Heart left ventricle (tissue), 16 donors: ENCODE measurements at regions of chr10 and their contacts with region 1.

Region 1: GRCh38 chr10:73167783-73168464 is at the starts of genes ECD and FAM149B1:
- DNase-seq: peak; percentile 94 to 96 (median 95)
- ATAC-seq: peak; percentile 92 to 99 (median 98)
- H3K4me3 ChIP-seq: peak within 1 kb of the TSS; percentile 71 to 98 (median 82)
- H3K27ac ChIP-seq: peak within 1 kb of the TSS; percentile 80 to 97 (median 94)
- H3K4me1 ChIP-seq: peaks cover 0 to 50% (median 31%) of the 10 kb centered on the region in 12 donors
- H3K27me3 ChIP-seq: no peaks in the 10 kb centered on the region
- CTCF ChIP-seq: peak in 4 of 12 donors; percentile 21 to 36 (median 26)
- POLR2A ChIP-seq: peak; percentile 76 to 95
- total RNA-seq, gene ECD: 13.3 to 21.9 (median 18.4) TPM
- total RNA-seq, gene FAM149B1: 9.9 to 21.8 (median 17.8) TPM

Region 2: DNA sequence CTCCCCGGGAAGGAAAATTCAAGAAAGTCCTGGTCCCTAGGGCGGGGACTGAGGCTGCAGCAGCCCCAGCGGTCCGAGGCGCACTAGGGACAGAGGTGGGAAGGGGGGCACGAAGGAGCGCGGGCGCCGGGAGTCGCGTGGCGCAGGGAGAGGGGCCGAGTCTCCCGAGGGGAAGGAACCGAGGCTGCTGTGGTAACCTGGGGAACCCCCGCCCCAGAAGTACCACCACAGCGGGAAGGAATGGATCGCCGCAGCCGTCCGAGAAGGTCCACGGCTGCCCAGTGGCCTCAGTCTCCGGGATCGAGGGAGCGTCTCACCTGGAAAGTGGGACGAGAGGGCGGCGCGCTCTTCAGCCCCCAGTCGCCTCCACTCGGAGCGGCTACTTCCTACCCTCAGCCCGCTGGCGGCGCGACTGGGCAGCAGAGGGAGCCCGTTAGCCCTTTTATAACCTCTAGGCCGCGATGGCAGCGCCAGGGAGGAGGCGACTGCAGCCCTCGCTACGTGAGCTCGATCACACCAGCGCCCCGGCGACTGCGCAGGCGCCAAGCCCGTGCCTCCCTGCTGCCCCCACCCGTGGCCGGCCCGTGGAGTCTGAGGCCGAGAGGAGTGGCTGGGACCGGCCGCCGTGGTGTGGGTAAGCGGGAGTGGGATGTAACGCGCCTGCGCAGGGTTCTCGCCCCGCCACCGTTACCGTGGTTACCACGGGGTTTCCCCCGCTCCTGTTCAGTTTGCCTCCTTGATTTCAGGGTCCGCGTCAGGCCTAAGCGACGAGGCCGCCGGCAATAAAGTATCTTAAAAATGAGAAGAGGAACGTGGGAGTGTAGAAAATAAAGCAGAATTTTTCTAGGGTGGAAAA is 71.2 kb before region 1 on chr10 and contains the start of gene P4HA1:
- intact Hi-C with region 1: loop called in 5 of 10 experiments (anchors 2 to 10 kb)
- DNase-seq: peak; percentile 99 to 100 (median 100)
- ATAC-seq: peak; percentile 96 to 98 (median 97)
- H3K4me3 ChIP-seq: peak within 1 kb of the TSS; percentile 47 to 93 (median 86)
- H3K27ac ChIP-seq: peak within 1 kb of the TSS; percentile 90 to 99 (median 97)
- H3K4me1 ChIP-seq: peaks cover 0 to 42% (median 19%) of the 10 kb centered on the region in 12 donors
- H3K27me3 ChIP-seq: no peaks in the 10 kb centered on the region
- CTCF ChIP-seq: peak; percentile 49 to 87 (median 72)
- POLR2A ChIP-seq: peak in 1 of 2 donors; percentile 98
- total RNA-seq, gene P4HA1: 44.5 to 71.7 (median 54.2) TPM

Region 3: DNA sequence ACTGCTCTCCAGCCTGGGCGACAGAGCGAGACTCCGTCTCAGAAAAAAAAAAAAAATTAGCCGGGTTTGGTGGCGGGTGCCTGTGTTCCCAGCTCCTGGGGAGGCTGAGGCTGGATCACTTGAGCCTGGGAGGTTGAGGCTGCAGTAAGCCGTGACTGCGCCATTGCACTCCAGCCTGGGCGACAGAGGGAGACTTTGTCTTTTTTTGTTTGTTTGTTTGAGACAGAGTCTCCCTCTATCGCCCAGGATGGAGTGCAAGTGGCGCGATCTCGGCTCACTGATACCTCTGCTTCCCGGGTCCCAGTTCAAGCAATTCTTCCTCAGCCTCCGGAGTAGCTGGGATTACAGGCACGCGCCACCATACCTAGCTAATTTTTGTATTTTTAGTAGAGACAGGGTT is 62.5 kb before region 1 on chr10:
- intact Hi-C with region 1: loop called in 2 of 10 experiments (anchors 5 to 10 kb)
- DNase-seq: no peak
- ATAC-seq: no peak
- H3K4me3 ChIP-seq: no peak overlapping the region
- H3K27ac ChIP-seq: no peak overlapping the region
- H3K4me1 ChIP-seq: peaks cover 0 to 2% (median 0%) of the 10 kb centered on the region in 12 donors
- H3K27me3 ChIP-seq: no peaks in the 10 kb centered on the region
- CTCF ChIP-seq: no peak
- POLR2A ChIP-seq: no peak

Region 4: GRCh38 chr10:73110345-73110849 is 57.5 kb before region 1 on chr10 and contains the start of gene NUDT13:
- intact Hi-C with region 1: loop called in 2 of 10 experiments (anchors 5 to 10 kb)
- DNase-seq: peak in 4 of 5 donors; percentile 79 to 82 (median 80)
- ATAC-seq: peak; percentile 95 to 98 (median 96)
- H3K4me3 ChIP-seq: peak within 1 kb of the TSS; percentile 38 to 70 (median 59)
- H3K27ac ChIP-seq: peak within 1 kb of the TSS; percentile 80 to 97 (median 88)
- H3K4me1 ChIP-seq: peaks cover 0 to 22% (median 6%) of the 10 kb centered on the region in 12 donors
- H3K27me3 ChIP-seq: no peaks in the 10 kb centered on the region
- CTCF ChIP-seq: no peak
- POLR2A ChIP-seq: peak in 1 of 2 donors; percentile 27
- total RNA-seq, gene NUDT13: 2.1 to 5.7 (median 3.2) TPM

Region 5: DNA sequence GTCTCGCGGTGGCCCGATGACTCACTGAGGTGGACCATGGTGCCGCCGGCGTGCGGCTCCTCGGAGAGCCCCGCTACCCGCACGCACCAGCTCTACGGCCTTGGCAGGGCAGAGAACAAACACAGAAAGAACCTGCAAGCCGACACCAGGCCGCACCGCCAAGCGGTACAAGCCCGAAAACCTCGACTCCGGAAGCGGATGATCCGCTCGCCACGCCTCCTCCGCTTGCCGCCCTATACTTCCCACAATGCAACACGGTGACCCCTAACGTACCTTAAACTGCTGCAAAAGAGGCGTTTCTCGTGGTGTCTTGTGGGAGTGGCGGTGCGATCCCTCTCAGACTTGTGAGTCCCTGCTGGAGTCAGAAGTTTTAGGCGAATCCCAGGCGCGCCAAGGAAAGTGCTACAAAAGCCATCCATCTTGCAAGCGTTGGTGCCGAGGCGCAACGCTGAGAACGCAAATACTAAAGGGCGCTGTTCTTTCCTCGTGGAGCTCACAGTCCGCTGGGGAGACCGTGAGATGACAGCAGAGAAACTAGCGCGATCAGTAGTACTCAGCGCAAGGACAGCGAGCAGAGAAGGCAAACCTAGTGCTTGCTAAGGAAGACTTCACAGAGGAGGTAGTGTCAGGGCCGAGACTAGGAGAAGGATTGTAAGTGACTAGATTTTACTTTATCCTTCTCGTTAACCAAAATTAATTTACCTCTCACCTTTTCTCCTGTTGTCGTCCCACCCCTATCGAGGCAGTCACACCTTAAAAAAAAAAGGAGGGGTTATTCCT is 84.7 kb after region 1 on chr10 and contains the start of gene MRPS16:
- intact Hi-C with region 1: loop called in 1 of 10 experiments (anchors 5 kb)
- DNase-seq: peak; percentile 92 to 96 (median 95)
- ATAC-seq: peak; percentile 98 to 99 (median 99)
- H3K4me3 ChIP-seq: peak within 1 kb of the TSS; percentile 64 to 97 (median 84)
- H3K27ac ChIP-seq: peak within 1 kb of the TSS; percentile 75 to 97 (median 88)
- H3K4me1 ChIP-seq: peaks cover 3 to 34% (median 24%) of the 10 kb centered on the region in 12 donors
- H3K27me3 ChIP-seq: no peaks in the 10 kb centered on the region
- CTCF ChIP-seq: peak in 2 of 12 donors; percentile 7 to 10
- POLR2A ChIP-seq: peak in 1 of 2 donors; percentile 79
- total RNA-seq, gene MRPS16: 56.5 to 112 (median 101) TPM